Left lung (tissue), 14 donors: ENCODE measurements at regions of chr5 and their contacts with region 1.

Region 1: DNA sequence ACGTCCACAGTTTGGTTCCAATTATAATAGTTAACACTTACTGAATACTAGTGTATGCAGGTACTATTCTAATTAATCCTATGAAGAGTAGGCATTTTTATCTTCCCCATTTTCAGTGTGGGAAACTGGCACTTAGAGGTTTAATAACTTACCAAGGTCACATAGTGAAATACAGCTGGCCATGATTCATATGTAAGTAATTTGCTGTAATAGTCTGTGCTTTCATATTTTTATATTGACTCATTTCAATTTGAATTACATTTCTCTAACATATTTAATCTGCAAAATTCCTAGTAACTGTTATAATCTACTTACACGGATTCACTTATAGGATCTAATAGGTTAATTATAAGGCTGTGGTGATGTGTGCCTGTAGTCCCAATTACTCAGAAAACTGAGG is 19.4 kb downstream of the CCNH start:
- DNase-seq: no peak
- ATAC-seq: peak; percentile 64
- H3K4me3 ChIP-seq: no peak overlapping the region
- H3K27ac ChIP-seq: no peak overlapping the region
- H3K4me1 ChIP-seq: peaks cover 0 to 8% of the 10 kb centered on the region in 2 donors
- H3K27me3 ChIP-seq: no peaks in the 10 kb centered on the region
- CTCF ChIP-seq: no peak

Region 2: GRCh38 chr5:87267574-87268125 is 125.7 kb before region 1 on chr5 and contains the start of gene RASA1:
- intact Hi-C with region 1: loop called in 1 of 2 experiments (anchors 10 kb)
- DNase-seq: peak; percentile 92 to 100 (median 96)
- ATAC-seq: peak; percentile 92
- H3K4me3 ChIP-seq: peak within 1 kb of the TSS; percentile 72 to 95
- H3K27ac ChIP-seq: peak within 1 kb of the TSS; percentile 89 to 96
- H3K4me1 ChIP-seq: peaks cover 4 to 34% of the 10 kb centered on the region in 2 donors
- H3K27me3 ChIP-seq: no peaks in the 10 kb centered on the region
- CTCF ChIP-seq: no peak
- polyA plus RNA-seq, gene RASA1: 52.0 to 60.7 (median 55.5) TPM